ENCODE measurements at regions of chr5 and their contacts with region 1.

Region 1: DNA sequence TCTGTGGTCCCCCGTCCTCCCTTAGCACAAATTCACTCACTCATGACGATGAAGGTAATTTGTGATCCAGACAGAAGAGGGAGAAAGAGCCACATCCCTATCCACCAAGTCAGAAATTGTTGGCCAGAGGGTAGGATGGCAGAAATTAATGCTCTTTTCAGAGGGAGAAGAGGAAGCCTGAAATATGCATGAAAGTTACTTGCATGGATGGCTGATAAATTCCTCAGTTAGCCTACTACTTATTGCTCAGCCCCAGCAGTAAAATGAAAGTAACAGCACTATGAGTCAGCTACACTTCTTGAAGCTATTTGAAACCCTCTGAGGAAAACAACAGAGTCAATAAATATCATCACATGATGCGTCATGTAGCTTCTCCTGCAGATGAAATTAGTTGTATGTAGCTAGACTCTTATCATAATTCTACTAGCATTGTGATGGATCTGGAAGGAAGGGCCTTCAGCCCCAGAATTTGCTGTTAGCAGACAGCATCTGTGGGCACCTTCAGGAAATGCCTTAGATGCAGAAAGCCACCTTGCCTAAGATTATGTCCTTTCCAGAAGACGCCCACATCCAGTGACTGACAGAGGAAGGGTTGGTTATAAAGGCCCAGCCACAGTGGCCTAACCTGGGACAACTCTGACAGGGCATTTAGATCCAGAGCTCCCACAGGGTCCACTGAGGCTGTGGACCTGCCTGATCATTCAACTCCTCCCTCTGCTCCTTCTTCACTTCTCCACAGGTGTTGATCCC is 81.2 kb upstream of the CCDC112 start:
- DNase-seq: peak; percentile 94
- ATAC-seq: peak; percentile 93
- H3K4me3 ChIP-seq: peak overlapping the region; percentile 0; the same call in 1 of the 2 replicates
- H3K27ac ChIP-seq: peak overlapping the region; percentile 35; the same call in 1 of the 2 replicates
- H3K4me1 ChIP-seq: peaks cover 6% of the 10 kb centered on the region
- H3K27me3 ChIP-seq: no peaks in the 10 kb centered on the region
- CTCF ChIP-seq: peak; percentile 48
- POLR2A ChIP-seq: no peak
- RAD21 ChIP-seq: peak; percentile 59

Region 2: DNA sequence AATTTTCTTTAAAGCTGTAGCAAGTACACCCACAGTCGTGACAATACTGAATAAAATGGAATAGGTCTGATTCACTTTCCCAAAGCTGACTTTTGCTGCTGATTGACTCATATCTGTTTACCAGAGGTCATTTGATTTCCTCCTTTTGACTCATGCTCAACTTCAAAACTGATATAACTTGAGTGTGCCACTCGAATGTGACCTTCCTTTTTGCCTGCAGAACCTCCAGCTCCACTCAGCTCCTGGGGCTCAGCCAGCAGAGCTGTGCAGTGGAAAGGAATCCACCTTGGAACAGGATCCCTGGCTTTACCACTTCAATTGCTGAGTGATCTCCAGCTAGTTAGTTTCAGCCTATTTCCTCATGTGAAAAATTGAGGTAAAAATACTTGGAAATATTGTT is 82.8 kb after region 1 on chr5:
- CTCF ChIA-PET with region 1: no interaction called
- POLR2A ChIA-PET with region 1: no interaction called
- dilution Hi-C with region 1: no loop called
- in situ Hi-C with region 1: no loop called
- intact Hi-C with region 1: no loop called
- DNase-seq: peak; percentile 92
- ATAC-seq: peak; percentile 52; the same call in 1 of the 2 replicates
- H3K4me3 ChIP-seq: no peak overlapping the region
- H3K27ac ChIP-seq: no peak overlapping the region
- H3K4me1 ChIP-seq: peaks cover 9% of the 10 kb centered on the region
- H3K27me3 ChIP-seq: no peaks in the 10 kb centered on the region
- CTCF ChIP-seq: no peak
- POLR2A ChIP-seq: no peak
- RAD21 ChIP-seq: no peak

Region 3: GRCh38 chr5:115586601-115587048 is 209.0 kb after region 1 on chr5:
- CTCF ChIA-PET with region 1: no interaction called
- POLR2A ChIA-PET with region 1: no interaction called
- dilution Hi-C with region 1: no loop called
- in situ Hi-C with region 1: no loop called
- intact Hi-C with region 1: loop called (anchors 2 kb)
- DNase-seq: peak; percentile 54
- ATAC-seq: peak; percentile 52; the same call in 1 of the 2 replicates
- H3K4me3 ChIP-seq: no peak overlapping the region
- H3K27ac ChIP-seq: no peak overlapping the region
- H3K4me1 ChIP-seq: peaks cover 6% of the 10 kb centered on the region
- H3K27me3 ChIP-seq: no peaks in the 10 kb centered on the region
- CTCF ChIP-seq: peak; percentile 67
- POLR2A ChIP-seq: no peak
- RAD21 ChIP-seq: peak; percentile 77